ENCODE measurements at regions of chr14 and their contacts with region 1.

Region 1: GRCh38 chr14:86915406-86915805 is 1077.6 kb downstream of the GALC start:
- DNase-seq: peak; percentile 36
- H3K4me3 ChIP-seq: no peak overlapping the region
- CTCF ChIP-seq: no peak

Region 2: DNA sequence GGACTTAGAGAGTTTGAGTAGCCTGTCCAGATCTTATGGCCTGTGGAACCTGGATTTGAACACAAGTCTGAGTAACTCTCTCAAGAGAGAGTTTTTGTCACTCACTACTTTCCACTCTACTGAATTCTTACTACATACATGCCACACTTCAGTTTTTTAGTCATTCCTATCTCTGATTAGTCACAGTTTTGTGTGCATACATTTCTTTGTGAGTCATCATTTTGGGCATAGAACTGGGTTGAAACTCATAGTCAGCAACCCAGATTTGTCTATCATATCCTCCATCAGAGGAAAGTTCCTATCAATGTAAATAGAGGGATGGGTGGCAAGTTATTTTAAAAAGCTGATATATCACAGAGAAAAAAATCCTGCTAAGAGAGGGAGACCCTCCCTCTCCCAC is 1342.6 kb before region 1 on chr14:
- in situ Hi-C with region 1: loop called (anchors 25 kb)
- DNase-seq: no peak
- H3K4me3 ChIP-seq: no peak overlapping the region
- CTCF ChIP-seq: no peak